Heart left ventricle (tissue), 16 donors: ENCODE measurements at regions of chr2 and their contacts with region 1.

Region 1: GRCh38 chr2:18378020-18378653 is 182.3 kb downstream of the RDH14 start:
- DNase-seq: peak in 3 of 5 donors; percentile 25 to 26 (median 25)
- ATAC-seq: peak in 2 of 4 donors; percentile 51 to 65
- H3K4me3 ChIP-seq: no peak overlapping the region
- H3K27ac ChIP-seq: no peak overlapping the region
- H3K4me1 ChIP-seq: no peaks in the 10 kb centered on the region
- H3K27me3 ChIP-seq: peaks cover 0 to 7% (median 0%) of the 10 kb centered on the region in 9 donors
- CTCF ChIP-seq: peak; percentile 67 to 85 (median 74)
- POLR2A ChIP-seq: no peak

Region 2: DNA sequence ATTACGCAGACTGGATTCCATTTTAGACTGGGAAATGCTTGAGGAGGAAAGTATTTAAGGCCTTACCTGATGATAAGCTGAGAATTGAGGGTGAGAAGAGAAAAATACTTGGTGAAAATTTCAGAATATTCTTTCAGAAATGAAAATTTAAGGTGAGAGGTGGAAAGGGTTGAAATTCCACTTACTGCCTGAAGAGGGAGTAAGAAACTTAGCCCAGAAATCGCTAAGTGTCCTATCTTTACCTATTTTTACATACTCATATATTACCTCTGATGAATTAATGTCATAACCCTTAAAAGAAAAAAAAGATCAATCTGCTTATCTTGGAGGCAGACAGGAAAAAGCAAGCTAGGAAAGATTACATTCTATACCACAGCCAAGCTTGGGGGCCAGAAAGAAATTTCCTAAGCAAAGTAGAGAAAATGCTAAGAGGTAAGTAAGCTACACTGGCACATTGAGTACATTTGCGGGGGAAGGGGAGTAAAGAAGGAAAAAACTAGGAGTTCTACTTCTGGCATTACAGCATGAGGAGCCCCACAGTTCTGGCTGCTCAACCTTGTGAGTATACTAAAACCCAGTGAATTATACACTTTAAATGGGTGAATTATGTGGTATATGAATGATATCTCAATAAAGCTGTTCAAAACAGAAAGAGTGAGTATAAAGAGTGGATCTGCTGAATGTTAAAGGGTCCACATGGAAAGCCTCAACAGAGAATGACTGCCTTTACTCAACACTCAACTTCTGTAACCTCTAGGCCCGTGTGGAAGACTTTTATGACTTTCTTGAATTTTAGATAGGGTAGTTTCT is 658.4 kb before region 1 on chr2:
- intact Hi-C with region 1: loop called in 3 of 10 experiments (anchors 5 to 10 kb)
- DNase-seq: no peak
- ATAC-seq: no peak
- H3K4me3 ChIP-seq: no peak overlapping the region
- H3K27ac ChIP-seq: no peak overlapping the region
- H3K4me1 ChIP-seq: no peaks in the 10 kb centered on the region
- H3K27me3 ChIP-seq: no peaks in the 10 kb centered on the region
- CTCF ChIP-seq: peak; percentile 74 to 93 (median 82)
- POLR2A ChIP-seq: no peak

Region 3: DNA sequence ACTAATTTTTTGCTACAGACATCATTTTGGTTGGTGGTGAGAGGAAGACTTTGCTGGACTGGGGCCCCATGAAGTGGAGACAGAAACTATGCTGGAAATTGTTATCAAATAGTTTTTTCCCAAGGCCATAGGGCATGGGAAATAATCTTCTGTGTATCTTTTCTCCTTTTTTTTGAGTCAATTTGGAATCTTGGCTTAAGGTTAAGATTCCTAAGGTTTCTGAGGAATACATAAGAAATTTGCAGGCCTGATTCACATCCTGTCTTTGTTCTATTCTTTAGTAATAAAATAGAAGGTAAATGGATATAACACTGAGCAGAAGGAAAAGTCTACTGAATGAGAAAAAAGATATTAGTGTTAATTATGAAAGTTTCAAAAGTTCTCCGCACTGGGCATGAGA is 641.1 kb before region 1 on chr2:
- intact Hi-C with region 1: loop called in 1 of 10 experiments (anchors 10 kb)
- DNase-seq: no peak
- ATAC-seq: peak in 1 of 4 donors; percentile 10
- H3K4me3 ChIP-seq: no peak overlapping the region
- H3K27ac ChIP-seq: peak overlapping the region in 8 of 12 donors; percentile 16 to 48 (median 28)
- H3K4me1 ChIP-seq: peaks cover 0 to 20% (median 0%) of the 10 kb centered on the region in 12 donors
- H3K27me3 ChIP-seq: no peaks in the 10 kb centered on the region
- CTCF ChIP-seq: no peak
- POLR2A ChIP-seq: no peak

Region 4: GRCh38 chr2:17851731-17852585 is 526.2 kb before region 1 on chr2:
- intact Hi-C with region 1: loop called in 9 of 10 experiments (anchors 1 to 5 kb)
- DNase-seq: peak in 4 of 5 donors; percentile 33 to 58 (median 47)
- ATAC-seq: peak; percentile 49 to 84 (median 73)
- H3K4me3 ChIP-seq: no peak overlapping the region
- H3K27ac ChIP-seq: no peak overlapping the region
- H3K4me1 ChIP-seq: peaks cover 0 to 6% (median 0%) of the 10 kb centered on the region in 12 donors
- H3K27me3 ChIP-seq: peaks cover 0 to 5% (median 0%) of the 10 kb centered on the region in 9 donors
- CTCF ChIP-seq: peak; percentile 72 to 90 (median 88)
- POLR2A ChIP-seq: no peak

Region 5: GRCh38 chr2:18149645-18150246 is 228.4 kb before region 1 on chr2:
- intact Hi-C with region 1: loop called in 1 of 10 experiments (anchors 10 kb)
- DNase-seq: no peak
- ATAC-seq: peak in 1 of 4 donors; percentile 41
- H3K4me3 ChIP-seq: no peak overlapping the region
- H3K27ac ChIP-seq: no peak overlapping the region
- H3K4me1 ChIP-seq: no peaks in the 10 kb centered on the region
- H3K27me3 ChIP-seq: no peaks in the 10 kb centered on the region
- CTCF ChIP-seq: peak; percentile 59 to 88 (median 73)
- POLR2A ChIP-seq: no peak

Region 6: GRCh38 chr2:18178736-18179349 is 199.3 kb before region 1 on chr2:
- intact Hi-C with region 1: loop called in 2 of 10 experiments (anchors 10 kb)
- DNase-seq: no peak
- ATAC-seq: peak in 1 of 4 donors; percentile 80
- H3K4me3 ChIP-seq: no peak overlapping the region
- H3K27ac ChIP-seq: no peak overlapping the region
- H3K4me1 ChIP-seq: peaks cover 0 to 6% (median 0%) of the 10 kb centered on the region in 12 donors
- H3K27me3 ChIP-seq: no peaks in the 10 kb centered on the region
- CTCF ChIP-seq: peak; percentile 60 to 86 (median 78)
- POLR2A ChIP-seq: no peak

Region 7: DNA sequence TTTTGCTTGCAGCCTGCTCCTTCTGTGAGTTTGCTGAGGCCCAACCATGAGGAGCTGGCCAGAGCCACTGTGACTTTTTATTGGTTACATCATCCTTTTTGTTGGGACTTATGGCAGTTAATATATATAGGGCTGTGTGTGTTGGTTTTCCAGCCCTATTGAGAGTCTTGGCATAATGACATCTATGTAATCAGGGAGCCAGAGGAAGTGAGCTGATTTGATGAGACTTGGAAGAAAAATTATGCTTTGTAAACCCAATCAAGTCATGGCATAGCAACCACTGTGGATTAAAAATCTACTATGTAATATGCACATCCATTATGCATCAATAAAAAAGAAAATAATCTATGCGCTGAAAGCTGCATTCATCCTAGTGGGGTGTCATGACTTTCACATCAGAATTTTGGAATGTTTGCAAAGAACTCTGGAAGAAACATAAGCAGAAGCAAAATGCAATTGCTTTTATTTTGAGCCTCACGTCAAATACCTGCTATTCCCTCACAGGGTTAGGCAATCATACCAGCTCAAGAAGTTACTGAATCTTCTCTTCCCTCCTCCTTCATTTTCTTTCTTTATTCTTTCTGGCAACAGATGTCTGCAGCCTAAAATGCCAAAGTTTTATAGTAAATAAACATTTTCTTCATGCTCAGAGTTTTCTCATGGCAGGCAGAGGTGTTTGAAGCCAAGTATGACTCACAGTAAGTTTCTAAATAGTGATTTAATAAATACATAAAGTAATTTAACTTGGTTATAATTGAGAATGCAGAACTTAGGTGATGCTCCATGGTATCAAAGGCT is 191.1 kb before region 1 on chr2:
- intact Hi-C with region 1: loop called in 1 of 10 experiments (anchors 10 kb)
- DNase-seq: no peak
- ATAC-seq: no peak
- H3K4me3 ChIP-seq: no peak overlapping the region
- H3K27ac ChIP-seq: no peak overlapping the region
- H3K4me1 ChIP-seq: peaks cover 0 to 5% (median 0%) of the 10 kb centered on the region in 12 donors
- H3K27me3 ChIP-seq: no peaks in the 10 kb centered on the region
- CTCF ChIP-seq: no peak
- POLR2A ChIP-seq: no peak

Region 8: DNA sequence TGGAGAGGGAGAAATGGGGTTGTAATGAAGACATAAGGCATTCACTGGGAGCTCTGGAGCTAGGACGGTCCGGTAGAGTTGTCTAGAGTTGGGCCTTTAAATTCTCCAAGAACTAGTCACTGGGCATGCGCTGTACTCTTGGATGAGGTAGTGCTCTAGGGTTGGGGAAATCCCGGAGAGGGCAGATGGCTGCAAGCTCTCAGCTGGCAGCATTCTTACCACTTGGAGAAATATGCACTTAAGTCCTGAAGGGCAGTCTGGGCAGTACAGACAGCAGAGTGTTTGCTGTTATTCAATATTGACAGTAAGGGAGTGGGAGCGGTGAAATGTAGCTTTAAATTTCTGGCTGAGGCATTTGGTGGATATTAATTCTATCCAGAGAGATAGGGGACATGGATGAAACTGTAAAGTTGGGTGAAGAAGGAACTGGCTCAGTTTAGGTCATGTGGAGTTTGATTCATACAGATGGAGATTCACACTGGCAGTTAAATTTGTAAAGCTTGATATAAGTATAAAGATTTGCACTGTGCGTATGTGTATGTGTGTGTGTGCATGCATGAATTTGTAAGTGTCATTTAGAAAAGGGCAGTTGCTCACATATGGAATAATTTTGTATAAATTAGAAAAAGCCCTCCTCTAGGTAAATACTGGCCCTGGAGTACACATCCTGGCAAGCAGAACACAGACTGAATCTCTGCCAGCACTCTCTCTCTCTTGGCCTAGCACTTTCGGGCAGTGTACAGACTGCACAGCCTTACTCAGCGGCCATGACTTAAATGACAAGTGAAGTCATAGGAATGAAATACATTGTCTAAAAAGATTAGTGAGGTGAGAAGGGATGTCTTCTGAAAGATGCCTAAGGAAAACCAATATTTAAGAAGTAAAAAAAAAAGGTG is 32.0 kb before region 1 on chr2:
- intact Hi-C with region 1: no loop called
- DNase-seq: peak in 4 of 5 donors; percentile 27 to 55 (median 44)
- ATAC-seq: peak; percentile 86 to 97 (median 95)
- H3K4me3 ChIP-seq: no peak overlapping the region
- H3K27ac ChIP-seq: peak overlapping the region in 7 of 12 donors; percentile 13 to 58 (median 26)
- H3K4me1 ChIP-seq: no peaks in the 10 kb centered on the region
- H3K27me3 ChIP-seq: no peaks in the 10 kb centered on the region
- CTCF ChIP-seq: peak in 1 of 12 donors; percentile 4
- POLR2A ChIP-seq: no peak